ENCODE measurements at regions of chr5 and their contacts with region 1.

Region 1: DNA sequence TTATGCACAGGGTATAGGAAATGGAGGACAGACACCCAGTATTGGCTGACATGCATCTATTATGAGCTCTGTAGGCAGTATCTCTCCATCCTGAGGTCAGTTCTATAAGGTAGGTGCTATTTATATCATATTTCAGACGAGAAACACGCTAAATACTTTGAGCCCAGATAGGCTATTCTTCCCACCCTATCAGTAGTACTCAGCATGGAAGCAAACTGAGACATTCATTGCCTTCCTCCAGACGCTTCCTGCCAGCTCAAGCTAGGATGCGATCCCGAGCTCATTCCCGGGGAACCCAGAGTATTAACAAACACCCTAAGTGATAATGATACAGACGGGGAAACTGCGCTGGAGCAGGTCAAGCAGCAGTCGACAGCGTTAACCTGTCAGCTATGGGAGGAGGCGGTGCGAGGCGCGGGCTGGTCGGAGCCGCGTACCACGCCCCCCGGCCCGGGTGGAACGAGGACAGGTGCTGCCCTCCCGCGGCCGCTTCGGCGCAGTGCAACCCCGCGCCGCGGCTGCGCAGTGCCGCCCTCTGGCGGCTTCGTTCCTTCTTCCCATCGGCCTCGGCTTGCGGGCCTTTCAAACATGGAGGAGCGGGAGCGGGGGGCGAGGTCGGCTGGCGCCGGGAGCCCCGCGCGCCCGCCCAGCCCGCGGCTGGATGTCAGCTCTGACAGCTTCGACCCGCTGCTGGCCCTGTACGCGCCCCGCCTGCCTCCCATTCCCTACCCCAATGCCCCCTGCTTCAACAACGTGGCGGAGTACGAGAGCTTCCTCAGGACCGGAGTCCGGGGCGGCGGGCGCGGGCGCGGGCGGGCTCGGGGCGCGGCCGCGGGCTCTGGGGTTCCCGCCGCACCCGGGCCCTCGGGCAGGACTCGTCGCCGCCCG is at the start of gene LSM11:
- DNase-seq: peak; percentile 89
- H3K4me3 Mint-ChIP-seq: peak within 1 kb of the TSS; percentile 90
- H3K27ac Mint-ChIP-seq: peak within 1 kb of the TSS; percentile 82
- H3K4me1 Mint-ChIP-seq: peaks cover 35% of the 10 kb centered on the region
- H3K27me3 Mint-ChIP-seq: no peaks in the 10 kb centered on the region
- total RNA-seq, gene LSM11: 8.7 and 8.9 TPM in 2 replicates

Region 2: DNA sequence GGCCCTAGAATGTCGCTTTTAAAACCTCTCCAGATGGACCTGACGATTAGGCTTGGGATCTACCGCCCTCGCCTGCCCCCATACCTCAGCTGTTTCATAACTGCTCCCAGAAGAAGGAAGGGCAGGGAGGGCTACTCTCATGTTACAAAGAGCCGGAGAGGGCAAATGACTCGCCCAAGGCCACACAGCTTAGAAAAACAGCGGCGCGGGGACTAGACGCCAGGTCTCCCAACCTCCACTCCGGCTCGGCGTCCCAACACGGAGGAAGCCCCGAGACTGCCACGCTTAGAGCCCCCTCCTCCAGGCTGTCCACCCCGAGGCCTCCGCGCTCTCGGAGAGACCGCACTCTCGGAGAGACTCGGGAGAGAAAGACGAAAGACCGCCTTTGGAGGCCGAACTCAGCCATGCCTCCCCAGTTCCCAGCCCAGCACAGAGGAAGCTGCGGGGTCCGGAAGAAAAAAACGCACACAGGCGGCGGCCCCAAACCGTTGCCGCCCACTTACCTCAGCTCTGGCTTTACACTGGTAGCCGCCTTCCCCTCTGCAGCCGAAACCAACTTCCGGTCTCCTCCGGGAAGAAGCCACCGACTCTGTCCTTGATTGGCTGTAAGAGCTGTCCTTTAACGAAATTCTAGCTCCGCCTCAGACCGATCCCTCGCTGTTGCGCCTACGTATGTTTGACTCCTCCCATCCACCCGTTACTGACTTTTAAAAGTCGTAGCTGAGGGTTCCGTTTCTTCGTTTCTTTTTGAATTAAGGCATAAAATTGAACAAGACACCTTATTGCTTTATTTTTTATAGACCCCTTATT is 600.9 kb before region 1 on chr5 and contains the start of gene MED7:
- intact Hi-C with region 1: loop called (anchors 10 kb)
- DNase-seq: peak; percentile 95
- H3K4me3 Mint-ChIP-seq: peak within 1 kb of the TSS; percentile 97
- H3K27ac Mint-ChIP-seq: peak within 1 kb of the TSS; percentile 97
- H3K4me1 Mint-ChIP-seq: peaks cover 31% of the 10 kb centered on the region
- H3K27me3 Mint-ChIP-seq: no peaks in the 10 kb centered on the region
- total RNA-seq, gene MED7: 12.5 and 13.1 TPM in 2 replicates

Region 3: GRCh38 chr5:157328277-157328912 is 415.0 kb before region 1 on chr5:
- intact Hi-C with region 1: loop called (anchors 1 kb)
- DNase-seq: peak; percentile 52
- H3K4me3 Mint-ChIP-seq: no peak overlapping the region
- H3K27ac Mint-ChIP-seq: peak overlapping the region; percentile 14
- H3K4me1 Mint-ChIP-seq: peaks cover 32% of the 10 kb centered on the region
- H3K27me3 Mint-ChIP-seq: no peaks in the 10 kb centered on the region

Region 4: DNA sequence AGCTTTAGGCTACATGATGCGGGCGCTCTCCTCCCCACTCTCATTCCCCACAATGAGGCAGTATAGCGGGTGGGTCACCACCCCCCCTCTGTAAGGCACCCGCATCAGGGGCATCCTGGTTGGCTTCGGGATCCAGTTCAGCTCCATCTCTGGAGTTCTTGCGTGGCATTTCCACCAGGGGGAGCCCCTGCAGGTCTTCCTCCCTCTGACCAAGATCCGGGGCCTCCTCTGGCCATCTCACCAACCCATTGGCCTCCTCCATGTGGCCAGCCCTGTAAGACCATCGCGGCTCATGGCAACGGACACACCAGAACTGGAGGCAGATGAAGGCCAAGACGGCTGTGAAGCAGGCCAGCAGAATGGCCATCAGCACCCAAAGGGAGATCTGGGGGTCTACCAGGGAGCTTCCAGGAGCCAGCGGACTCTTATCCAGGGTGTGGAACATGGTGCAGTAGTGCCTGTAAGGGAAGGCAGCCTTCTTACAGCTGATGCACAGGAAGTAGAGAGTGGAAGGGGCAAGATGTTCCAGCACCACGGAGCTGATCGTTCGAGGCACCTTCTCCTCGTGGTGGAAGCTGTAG is 400.5 kb before region 1 on chr5:
- intact Hi-C with region 1: loop called (anchors 5 kb)
- DNase-seq: no peak
- H3K4me3 Mint-ChIP-seq: no peak overlapping the region
- H3K27ac Mint-ChIP-seq: peak overlapping the region; percentile 6
- H3K4me1 Mint-ChIP-seq: peaks cover 29% of the 10 kb centered on the region
- H3K27me3 Mint-ChIP-seq: no peaks in the 10 kb centered on the region

Region 5: DNA sequence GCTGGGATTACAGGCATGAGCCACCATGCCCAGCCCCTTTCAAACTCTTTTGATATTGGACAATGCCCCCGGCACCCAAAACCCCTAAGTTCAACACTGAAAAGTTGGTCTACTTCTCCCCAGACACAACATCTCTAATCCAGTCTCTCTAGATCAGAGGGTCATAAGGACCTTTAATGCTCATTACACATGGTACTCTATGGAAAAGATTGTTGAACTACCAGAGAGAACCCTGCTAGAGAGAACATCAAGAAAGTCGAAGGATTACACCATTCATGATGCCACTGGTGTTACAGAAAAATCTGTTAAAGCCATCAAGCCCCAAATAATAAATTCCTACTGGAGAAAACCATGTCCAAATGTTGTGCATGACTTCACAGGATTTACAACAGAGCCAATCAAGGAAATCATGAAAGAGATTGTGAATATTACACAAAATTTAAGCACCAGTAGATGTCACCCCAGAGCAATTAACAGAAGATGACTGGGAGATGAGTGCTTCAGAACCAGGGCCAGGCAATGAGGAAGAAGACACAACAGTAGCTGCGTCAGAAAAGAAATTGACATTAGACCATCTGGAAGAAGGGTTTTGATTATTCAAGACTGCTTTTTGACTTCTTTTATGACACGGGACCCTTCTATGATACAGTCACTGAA is 311.7 kb before region 1 on chr5:
- intact Hi-C with region 1: loop called (anchors 1 kb)
- DNase-seq: peak; percentile 20
- H3K4me3 Mint-ChIP-seq: no peak overlapping the region
- H3K27ac Mint-ChIP-seq: no peak overlapping the region
- H3K4me1 Mint-ChIP-seq: peaks cover 12% of the 10 kb centered on the region
- H3K27me3 Mint-ChIP-seq: peaks cover 28% of the 10 kb centered on the region

Region 6: GRCh38 chr5:157670662-157671591 is 72.5 kb before region 1 on chr5 and contains the start of gene C5orf52:
- intact Hi-C with region 1: loop called (anchors 1 kb)
- DNase-seq: no peak
- H3K4me3 Mint-ChIP-seq: peak within 1 kb of the TSS; percentile 90
- H3K27ac Mint-ChIP-seq: peak within 1 kb of the TSS; percentile 74
- H3K4me1 Mint-ChIP-seq: peaks cover 28% of the 10 kb centered on the region
- H3K27me3 Mint-ChIP-seq: peaks cover 8% of the 10 kb centered on the region
- total RNA-seq, gene C5orf52: 0.30 TPM in 1 of 2 replicates, not detected in the other

Region 7: GRCh38 chr5:157731272-157732129 is 11.9 kb before region 1 on chr5 and contains the start of gene THG1L:
- intact Hi-C with region 1: loop called (anchors 1 kb)
- DNase-seq: peak; percentile 97
- H3K4me3 Mint-ChIP-seq: peak within 1 kb of the TSS; percentile 90
- H3K27ac Mint-ChIP-seq: peak within 1 kb of the TSS; percentile 95
- H3K4me1 Mint-ChIP-seq: peaks cover 26% of the 10 kb centered on the region
- H3K27me3 Mint-ChIP-seq: no peaks in the 10 kb centered on the region
- total RNA-seq, gene THG1L: 28.8 and 29.3 TPM in 2 replicates

Measured in activated T-helper 2 cell treated with anti-CD3 and anti-CD28 coated beads, Interferon-gamma antibody, Interleukin-2, Interleukin-4, amounts not matched to agents 10 μg/mL and 5 μg/mL and 100 μg/mL, durations not matched to agents 14 hours and 24 hours and 36 hours (primary cell).